ENCODE measurements at regions of chr13 and their contacts with region 1.

Region 1: GRCh38 chr13:46893798-46894560 is 2.9 kb downstream of the HTR2A start:
- DNase-seq: peak; percentile 88
- H3K4me3 ChIP-seq: peak overlapping the region; percentile 66 to 82
- H3K27ac ChIP-seq: peak overlapping the region; percentile 48 to 68; a peak in 3 of 4 replicates
- H3K4me1 ChIP-seq: peaks cover 0 to 16% of the 10 kb centered on the region in 2 experiments; a peak in 3 of 4 replicates
- H3K27me3 ChIP-seq: no peaks in the 10 kb centered on the region
- CTCF ChIP-seq: peak; percentile 98
- EP300 ChIP-seq: no peak
- RAD21 ChIP-seq: peak; percentile 55

Region 2: GRCh38 chr13:46874006-46874405 is 20.0 kb before region 1 on chr13:
- CTCF ChIA-PET with region 1: interaction called, 11 read pairs
- POLR2A ChIA-PET with region 1: no interaction called
- DNase-seq: no peak
- H3K4me3 ChIP-seq: no peak overlapping the region
- H3K27ac ChIP-seq: no peak overlapping the region
- H3K4me1 ChIP-seq: no peaks in the 10 kb centered on the region
- H3K27me3 ChIP-seq: no peaks in the 10 kb centered on the region
- CTCF ChIP-seq: no peak
- EP300 ChIP-seq: no peak
- RAD21 ChIP-seq: no peak

Region 3: GRCh38 chr13:47459512-47459911 is 565.5 kb after region 1 on chr13:
- CTCF ChIA-PET with region 1: interaction called, 10 read pairs
- POLR2A ChIA-PET with region 1: no interaction called
- DNase-seq: peak; percentile 3
- H3K4me3 ChIP-seq: no peak overlapping the region
- H3K27ac ChIP-seq: no peak overlapping the region
- H3K4me1 ChIP-seq: no peaks in the 10 kb centered on the region; a peak in 1 of 4 replicates
- H3K27me3 ChIP-seq: no peaks in the 10 kb centered on the region
- CTCF ChIP-seq: peak; percentile 51
- EP300 ChIP-seq: no peak
- RAD21 ChIP-seq: peak; percentile 53

Measured in SK-N-SH (cell line).